PC-3 (cell line): ENCODE measurements at regions of chr5 and their contacts with region 1.

Region 1: GRCh38 chr5:10233505-10233904 is 16.2 kb downstream of the ATPSCKMT start:
- DNase-seq: peak; percentile 95
- ATAC-seq: peak; percentile 94
- H3K4me3 ChIP-seq: no peak overlapping the region
- H3K27ac ChIP-seq: peak overlapping the region; percentile 16
- H3K4me1 ChIP-seq: peaks cover 21% of the 10 kb centered on the region
- H3K27me3 ChIP-seq: no peaks in the 10 kb centered on the region
- CTCF ChIP-seq: peak; percentile 95

Region 2: GRCh38 chr5:10140195-10140973 is 93.1 kb before region 1 on chr5:
- CTCF ChIA-PET with region 1: no interaction called
- POLR2A ChIA-PET with region 1: no interaction called
- intact Hi-C with region 1: loop called (anchors 1 kb)
- DNase-seq: peak; percentile 58
- ATAC-seq: peak; percentile 87
- H3K4me3 ChIP-seq: no peak overlapping the region
- H3K27ac ChIP-seq: no peak overlapping the region
- H3K4me1 ChIP-seq: no peaks in the 10 kb centered on the region
- H3K27me3 ChIP-seq: no peaks in the 10 kb centered on the region
- CTCF ChIP-seq: peak; percentile 76

Region 3: GRCh38 chr5:10536931-10537579 is 303.6 kb after region 1 on chr5:
- CTCF ChIA-PET with region 1: no interaction called
- POLR2A ChIA-PET with region 1: no interaction called
- intact Hi-C with region 1: no loop called
- DNase-seq: no peak
- ATAC-seq: no peak
- H3K4me3 ChIP-seq: no peak overlapping the region
- H3K27ac ChIP-seq: no peak overlapping the region
- H3K4me1 ChIP-seq: no peaks in the 10 kb centered on the region; the same call in 1 of the 2 replicates
- H3K27me3 ChIP-seq: no peaks in the 10 kb centered on the region
- CTCF ChIP-seq: no peak

Region 4: DNA sequence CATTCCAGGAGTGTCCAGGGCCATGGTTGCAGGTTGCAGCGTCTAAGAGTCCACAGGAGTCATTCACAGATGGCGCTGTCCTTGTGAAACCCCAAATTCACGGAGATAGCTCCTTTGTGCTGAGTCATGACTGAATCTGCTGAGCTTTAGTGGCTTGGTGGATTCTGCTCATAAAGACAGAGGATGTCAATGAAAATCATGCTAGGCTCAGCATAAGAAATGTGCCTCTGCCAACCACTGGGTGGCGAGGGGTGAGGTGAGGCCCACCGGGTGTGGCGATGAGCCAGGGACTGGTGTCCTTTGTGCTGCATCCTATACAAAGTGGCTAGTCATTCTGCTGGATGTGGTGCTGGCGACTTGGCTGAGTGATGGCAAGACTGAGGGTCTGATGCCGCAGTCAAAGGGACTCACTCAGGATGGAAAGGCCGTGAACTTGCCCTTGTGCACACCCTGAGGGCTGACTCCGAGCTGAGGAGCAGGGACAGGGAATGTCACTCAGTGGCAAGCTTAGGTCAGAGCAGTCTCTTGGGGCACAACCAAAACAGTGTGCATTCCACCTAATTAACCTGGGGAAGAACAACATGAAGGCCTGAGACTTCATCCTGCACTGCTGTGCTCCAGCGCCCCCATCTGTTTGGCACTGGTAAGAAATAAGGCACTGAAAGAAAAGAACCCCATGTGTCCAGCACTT is 456.0 kb after region 1 on chr5:
- CTCF ChIA-PET with region 1: no interaction called
- POLR2A ChIA-PET with region 1: no interaction called
- intact Hi-C with region 1: no loop called
- DNase-seq: peak; percentile 68
- ATAC-seq: peak; percentile 42; the same call in 1 of the 2 replicates
- H3K4me3 ChIP-seq: no peak overlapping the region
- H3K27ac ChIP-seq: no peak overlapping the region
- H3K4me1 ChIP-seq: peaks cover 16% of the 10 kb centered on the region
- H3K27me3 ChIP-seq: no peaks in the 10 kb centered on the region
- CTCF ChIP-seq: peak; percentile 64; the same call in 1 of the 2 replicates